ENCODE measurements at regions of chr12 and their contacts with region 1.

Region 1: DNA sequence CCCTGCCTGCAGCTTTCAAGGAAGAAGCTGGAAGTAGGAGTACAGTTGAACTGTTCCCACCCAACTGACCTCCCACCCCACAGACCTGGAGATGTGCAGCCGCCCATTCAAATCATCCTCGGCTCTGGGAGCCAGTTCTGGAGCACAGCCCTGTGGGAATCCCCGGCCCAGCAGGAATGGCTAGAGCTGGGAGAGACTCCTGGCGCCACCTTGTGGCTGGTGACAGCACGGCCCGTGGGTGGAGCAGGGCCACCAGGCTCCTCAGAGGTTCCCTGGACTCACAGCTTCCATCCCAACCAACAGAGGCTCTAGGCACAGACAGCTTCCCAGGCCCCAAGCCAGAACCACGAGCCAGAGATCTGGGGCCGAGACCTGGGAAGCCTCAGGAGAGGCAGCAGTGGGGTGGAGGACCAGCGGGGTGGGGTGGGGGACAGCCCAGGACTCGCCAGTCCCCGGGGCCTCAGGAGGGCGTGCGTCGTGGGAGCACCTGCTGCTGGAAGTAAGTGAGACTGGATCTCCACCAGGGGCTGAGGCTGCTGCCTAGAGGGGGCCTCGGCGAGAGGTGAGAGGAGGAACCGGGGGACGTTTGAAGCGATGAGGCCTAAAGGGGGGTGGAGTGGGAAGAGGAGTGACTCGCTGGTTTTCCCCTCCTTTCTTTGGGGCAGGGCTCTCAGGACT is 43.4 kb downstream of the RNF34 start:
- DNase-seq: peak; percentile 85
- H3K4me3 ChIP-seq: no peak overlapping the region
- H3K27ac ChIP-seq: no peak overlapping the region
- H3K4me1 ChIP-seq: peaks cover 7% of the 10 kb centered on the region
- H3K27me3 ChIP-seq: no peaks in the 10 kb centered on the region
- CTCF ChIP-seq: peak; percentile 82

Region 2: DNA sequence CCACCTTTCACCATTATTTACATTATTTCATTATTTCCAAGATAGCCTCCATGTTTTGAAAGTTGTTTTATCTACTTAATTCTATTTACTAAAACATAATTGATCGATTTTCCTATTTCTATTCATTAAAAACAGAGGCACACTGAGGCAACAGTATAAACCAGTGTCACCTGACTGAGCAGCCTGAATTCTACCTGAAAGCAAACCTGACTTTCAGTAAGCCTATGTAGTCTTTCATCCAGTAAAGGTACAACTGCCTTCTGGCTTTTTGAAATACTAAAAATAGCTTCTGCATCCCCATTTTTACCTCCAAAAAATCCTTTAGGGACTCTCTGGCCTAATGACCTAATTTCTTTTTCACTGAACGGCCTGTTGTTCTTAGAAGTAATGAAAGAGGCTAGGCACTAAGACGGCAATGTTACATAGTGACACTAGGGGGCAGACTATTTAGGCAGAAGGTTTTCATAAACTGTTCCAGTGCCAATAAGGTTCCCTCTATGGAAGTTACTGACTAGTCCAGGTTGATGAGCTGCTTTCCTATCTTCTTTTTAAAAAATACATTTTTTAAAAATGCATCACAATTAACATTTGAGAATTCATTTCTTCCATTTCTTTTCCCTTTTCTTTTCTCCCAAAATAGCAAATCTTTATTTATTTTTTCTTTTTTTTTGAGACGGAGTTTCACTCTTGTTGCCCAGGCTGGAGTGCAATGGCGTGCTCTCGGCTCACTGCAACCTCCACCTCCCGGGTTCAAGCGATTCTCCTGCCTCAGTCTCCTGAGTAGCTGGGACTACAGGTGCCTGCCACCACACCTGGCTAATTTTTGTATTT is 108.6 kb before region 1 on chr12:
- intact Hi-C with region 1: loop called (anchors 5 kb)
- DNase-seq: peak; percentile 27
- H3K4me3 ChIP-seq: no peak overlapping the region
- H3K27ac ChIP-seq: no peak overlapping the region
- H3K4me1 ChIP-seq: no peaks in the 10 kb centered on the region
- H3K27me3 ChIP-seq: no peaks in the 10 kb centered on the region
- CTCF ChIP-seq: peak; percentile 83

Region 3: DNA sequence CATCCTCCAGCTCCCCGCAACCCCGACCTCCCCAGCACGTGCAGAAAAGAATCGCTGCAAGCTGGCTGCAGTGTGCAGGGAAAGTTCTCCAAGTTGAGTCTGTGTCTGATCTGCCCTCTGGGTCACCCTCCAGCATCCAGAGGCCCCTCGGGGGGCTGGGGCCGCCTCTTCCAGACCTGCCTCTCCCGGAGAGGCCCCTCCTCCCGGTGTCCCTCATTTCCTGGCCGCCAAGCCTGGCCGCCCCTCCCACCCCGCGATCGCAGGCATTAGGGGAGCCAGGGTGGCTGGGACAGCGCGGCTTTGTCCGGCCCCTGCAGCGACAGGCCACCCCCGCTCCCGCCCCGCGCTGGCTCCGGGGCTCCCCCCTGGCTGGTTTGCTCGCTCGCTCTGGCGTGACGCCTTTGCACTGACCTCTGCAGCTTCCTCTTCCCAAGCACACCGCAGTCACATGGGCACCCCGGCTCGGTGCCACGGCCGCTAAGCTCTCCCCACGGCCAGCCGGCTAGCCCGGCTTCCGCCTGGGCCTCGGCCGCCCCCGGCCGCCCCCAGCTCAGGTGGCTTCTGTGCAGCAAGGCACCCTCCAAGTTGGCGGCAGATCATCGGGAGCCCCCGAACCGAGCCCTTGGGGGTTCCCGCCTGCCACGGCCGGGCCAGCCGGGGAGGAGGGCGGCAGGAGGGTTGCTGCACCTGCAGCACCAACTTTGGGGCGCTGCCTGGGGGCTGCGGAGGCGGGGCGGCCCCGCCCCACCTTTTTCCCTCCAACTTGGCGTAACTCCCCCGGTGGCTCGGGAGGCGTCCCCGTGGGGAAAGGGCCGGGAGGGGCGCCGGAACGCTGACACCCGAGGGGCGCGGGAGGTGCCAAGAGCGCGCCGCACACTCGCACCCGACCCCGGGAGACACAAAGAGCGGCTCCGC is 93.8 kb after region 1 on chr12:
- intact Hi-C with region 1: no loop called
- DNase-seq: peak; percentile 84
- H3K4me3 ChIP-seq: peak overlapping the region; percentile 69
- H3K27ac ChIP-seq: peak overlapping the region; percentile 87
- H3K4me1 ChIP-seq: peaks cover 15% of the 10 kb centered on the region
- H3K27me3 ChIP-seq: no peaks in the 10 kb centered on the region
- CTCF ChIP-seq: no peak